ENCODE measurements at regions of chr1 and their contacts with region 1.

Region 1: GRCh38 chr1:184075055-184076029 is 23.8 kb downstream of the TSEN15 start:
- DNase-seq: no peak
- ATAC-seq: peak; percentile 86

Region 2: DNA sequence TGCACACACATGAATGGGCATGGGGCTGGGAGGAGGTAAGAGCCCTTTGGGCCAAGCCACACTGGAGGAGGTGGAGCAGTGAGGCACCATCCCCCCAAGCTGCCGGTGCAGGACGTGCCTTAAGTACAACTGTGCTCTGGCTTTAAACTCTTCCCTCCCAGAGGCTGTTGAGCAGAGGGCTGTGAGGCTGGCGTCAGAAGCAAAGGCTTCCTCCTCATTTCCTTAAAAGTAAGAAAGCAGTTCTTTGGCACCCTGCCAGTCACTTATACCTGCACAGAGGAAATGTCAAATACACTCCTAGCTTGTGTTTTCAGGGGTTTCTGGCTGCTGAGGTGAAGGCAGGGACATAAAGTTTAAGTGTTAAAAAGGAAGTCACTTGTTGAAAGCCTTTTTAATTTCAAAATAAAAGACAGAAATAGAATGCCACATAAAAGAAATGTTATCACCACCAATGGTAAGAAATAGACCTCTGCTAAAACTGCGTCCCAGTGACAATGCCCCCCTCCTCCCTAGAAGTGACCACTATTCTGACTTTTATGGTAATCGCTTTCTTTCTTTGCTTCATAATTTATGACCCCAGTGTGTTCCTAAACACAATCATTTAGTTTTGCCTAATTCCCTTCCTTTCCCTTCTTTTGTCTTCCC is 856.2 kb before region 1 on chr1:
- intact Hi-C with region 1: no loop called
- DNase-seq: no peak
- ATAC-seq: peak; percentile 59

Region 3: DNA sequence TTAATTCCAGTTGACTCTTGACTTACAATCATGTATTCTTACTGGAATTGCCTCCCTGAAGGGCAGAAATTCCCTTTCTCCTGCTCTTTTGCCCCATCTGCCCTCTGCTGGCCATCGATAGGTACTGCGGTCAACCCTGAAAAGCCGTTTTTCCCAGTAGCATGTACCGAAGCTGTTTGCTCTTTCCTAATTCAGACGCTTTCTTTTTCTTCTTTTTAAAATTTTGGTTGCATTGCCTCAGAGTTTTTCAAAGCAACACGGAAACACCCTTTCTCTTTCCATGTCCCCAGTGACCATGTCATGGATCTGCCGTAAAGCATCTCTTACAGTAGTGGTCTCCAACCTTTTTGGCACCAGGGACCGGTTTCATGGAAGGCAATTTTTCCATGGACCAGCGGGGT is 147.3 kb after region 1 on chr1:
- intact Hi-C with region 1: loop called (anchors 1 kb)
- DNase-seq: no peak
- ATAC-seq: peak; percentile 59

Region 4: GRCh38 chr1:184296466-184297243 is 221.3 kb after region 1 on chr1:
- intact Hi-C with region 1: loop called (anchors 5 kb)
- DNase-seq: peak; percentile 91
- ATAC-seq: peak; percentile 88

Region 5: GRCh38 chr1:184457500-184457899 is 382.2 kb after region 1 on chr1:
- intact Hi-C with region 1: no loop called
- DNase-seq: no peak
- ATAC-seq: no peak

Region 6: DNA sequence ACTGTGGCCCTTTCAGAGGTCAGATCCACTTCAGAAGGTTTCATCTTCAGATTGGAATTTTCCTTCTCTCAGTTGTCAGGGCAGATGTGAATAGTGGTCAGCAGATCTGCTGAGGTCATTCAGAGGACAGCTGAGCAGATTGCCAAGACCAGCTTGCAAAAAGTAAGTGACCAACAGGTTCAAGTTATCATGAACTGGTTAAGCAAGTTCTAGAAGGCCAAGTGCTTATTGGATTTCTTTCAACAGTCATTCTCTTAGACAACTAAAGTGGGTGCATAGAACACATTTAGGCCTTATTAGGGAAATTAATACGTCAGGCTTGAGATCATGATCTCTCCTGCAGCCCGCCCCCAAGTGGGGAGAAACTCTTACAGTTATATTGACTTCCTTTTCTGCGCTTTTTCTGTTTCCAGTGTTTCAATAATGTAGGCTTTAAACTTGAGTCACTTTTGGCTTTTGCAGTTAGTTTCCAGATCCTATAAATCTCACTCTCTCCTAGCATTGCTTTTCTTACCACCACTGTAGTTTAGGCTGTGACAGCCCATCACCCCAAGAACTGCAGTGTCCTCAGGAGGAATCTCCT is 407.9 kb after region 1 on chr1:
- intact Hi-C with region 1: loop called (anchors 10 kb)
- DNase-seq: no peak
- ATAC-seq: peak; percentile 65

Region 7: GRCh38 chr1:184563308-184563707 is 488.0 kb after region 1 on chr1:
- intact Hi-C with region 1: loop called (anchors 5 kb)
- DNase-seq: no peak
- ATAC-seq: peak; percentile 47

Region 8: GRCh38 chr1:184691719-184692324 is 616.5 kb after region 1 on chr1:
- intact Hi-C with region 1: loop called (anchors 5 kb)
- DNase-seq: no peak
- ATAC-seq: no peak

Measured in Right ventricle myocardium inferior (tissue), 1 donor.